Activated naive CD4-positive, alpha-beta T cell treated with anti-CD3 and anti-CD28 coated beads for 36 hours (primary cell): ENCODE measurements at regions of chr7 and their contacts with region 1.

Region 1: GRCh38 chr7:39732837-39733804 is 109.7 kb downstream of the RALA start:
- DNase-seq: peak; percentile 98
- H3K4me3 Mint-ChIP-seq: peak overlapping the region; percentile 74
- H3K27ac Mint-ChIP-seq: peak overlapping the region; percentile 61
- H3K4me1 Mint-ChIP-seq: peaks cover 32% of the 10 kb centered on the region
- H3K27me3 Mint-ChIP-seq: peaks cover 3% of the 10 kb centered on the region

Region 2: DNA sequence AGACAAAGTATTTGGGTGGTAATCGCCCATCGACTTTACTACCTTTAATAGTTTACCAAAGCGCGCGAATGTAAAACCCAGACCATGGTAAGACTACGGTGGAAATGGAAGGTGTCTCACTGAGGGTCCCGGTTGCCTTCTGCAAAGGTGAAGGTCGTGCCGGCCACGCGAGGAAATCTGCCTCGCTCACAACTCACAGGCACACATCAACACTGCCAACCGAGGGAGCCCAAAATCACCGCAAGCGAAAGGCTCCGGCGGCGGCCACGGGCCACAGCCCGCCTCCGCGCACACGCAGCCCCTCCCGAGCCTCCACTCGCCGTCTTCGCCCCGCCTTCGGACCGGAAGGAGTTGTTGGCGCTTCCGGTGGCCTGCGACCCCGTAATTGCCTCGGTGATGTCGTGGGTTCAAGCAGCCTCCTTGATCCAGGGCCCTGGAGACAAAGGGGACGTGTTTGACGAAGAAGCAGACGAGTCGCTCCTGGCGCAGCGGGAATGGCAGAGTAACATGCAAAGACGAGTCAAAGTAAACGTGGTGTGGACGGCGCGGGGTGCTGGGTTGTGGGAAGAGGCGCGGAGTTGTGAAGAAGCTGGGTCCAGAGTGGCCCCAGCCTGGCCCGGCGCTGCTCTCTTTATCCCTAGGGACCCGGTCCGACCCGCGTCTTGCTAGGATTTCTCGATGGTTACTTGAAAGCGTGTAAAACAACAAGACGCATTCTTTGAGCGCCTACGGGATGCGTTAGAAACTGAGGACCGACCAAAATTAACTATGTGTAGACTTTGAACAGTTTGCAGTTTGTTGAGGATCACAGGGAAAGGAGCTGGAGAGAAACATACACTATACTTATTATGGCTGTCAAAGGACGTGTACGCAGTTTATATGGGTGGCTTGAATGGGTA is 166.8 kb before region 1 on chr7 and contains the start of gene YAE1:
- CTCF ChIA-PET with region 1: no interaction called
- intact Hi-C with region 1: loop called (anchors 1 kb)
- DNase-seq: peak; percentile 86
- H3K4me3 Mint-ChIP-seq: peak within 1 kb of the TSS; percentile 97
- H3K27ac Mint-ChIP-seq: peak within 1 kb of the TSS; percentile 95
- H3K4me1 Mint-ChIP-seq: peaks cover 18% of the 10 kb centered on the region
- H3K27me3 Mint-ChIP-seq: no peaks in the 10 kb centered on the region
- total RNA-seq, gene YAE1: 4.6 to 5.5 TPM

Region 3: GRCh38 chr7:39589323-39590111 is 143.6 kb before region 1 on chr7:
- CTCF ChIA-PET with region 1: interaction called, 3 read pairs
- intact Hi-C with region 1: loop called (anchors 1 kb)
- DNase-seq: peak; percentile 92
- H3K4me3 Mint-ChIP-seq: no peak overlapping the region
- H3K27ac Mint-ChIP-seq: peak overlapping the region; percentile 52
- H3K4me1 Mint-ChIP-seq: peaks cover 39% of the 10 kb centered on the region
- H3K27me3 Mint-ChIP-seq: no peaks in the 10 kb centered on the region

Region 4: GRCh38 chr7:39633563-39634477 is 99.3 kb before region 1 on chr7:
- CTCF ChIA-PET with region 1: no interaction called
- intact Hi-C with region 1: loop called (anchors 1 kb)
- DNase-seq: peak; percentile 26
- H3K4me3 Mint-ChIP-seq: no peak overlapping the region
- H3K27ac Mint-ChIP-seq: peak overlapping the region; percentile 75
- H3K4me1 Mint-ChIP-seq: peaks cover 81% of the 10 kb centered on the region
- H3K27me3 Mint-ChIP-seq: no peaks in the 10 kb centered on the region

Region 5: GRCh38 chr7:39746103-39746819 is 13.1 kb after region 1 on chr7:
- CTCF ChIA-PET with region 1: interaction called, 7 read pairs
- intact Hi-C with region 1: loop called (anchors 1 kb)
- DNase-seq: peak; percentile 76
- H3K4me3 Mint-ChIP-seq: no peak overlapping the region
- H3K27ac Mint-ChIP-seq: no peak overlapping the region
- H3K4me1 Mint-ChIP-seq: peaks cover 18% of the 10 kb centered on the region
- H3K27me3 Mint-ChIP-seq: no peaks in the 10 kb centered on the region